ENCODE measurements at regions of chr3 and their contacts with region 1.

Region 1: DNA sequence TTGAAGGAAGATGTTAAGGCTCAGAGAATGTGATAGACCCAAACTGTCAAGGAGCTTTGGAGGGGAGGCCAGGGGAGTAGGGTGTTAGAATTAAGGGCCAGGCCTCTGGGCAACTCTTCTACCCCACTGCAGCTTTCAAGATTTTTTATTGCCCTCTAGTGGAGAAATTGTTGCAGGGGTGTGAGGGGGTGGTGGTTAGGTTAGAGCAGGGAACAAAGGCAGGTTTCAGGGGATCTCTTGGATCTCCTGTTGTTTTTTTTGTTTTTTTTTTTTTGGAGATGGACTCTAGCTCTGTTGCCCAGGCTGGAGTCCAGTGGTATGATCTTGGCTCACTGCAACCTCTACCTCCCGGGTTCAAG is 1.4 kb upstream of the SEC13 start:
- DNase-seq: peak in 3 of 9 donors; percentile 12 to 32 (median 17)
- ATAC-seq: no peak
- H3K4me3 ChIP-seq: no peak overlapping the region
- H3K4me3 Mint-ChIP-seq: peak overlapping the region in 5 of 10 donors; percentile 5 to 85 (median 32)
- H3K27ac ChIP-seq: no peak overlapping the region
- H3K27ac Mint-ChIP-seq: peak overlapping the region in 8 of 9 donors; percentile 0 to 97 (median 86)
- H3K4me1 ChIP-seq: peaks cover 12 to 22% of the 10 kb centered on the region in 2 donors
- H3K4me1 Mint-ChIP-seq: peaks cover 5 to 40% (median 30%) of the 10 kb centered on the region in 7 donors
- H3K27me3 ChIP-seq: no peaks in the 10 kb centered on the region
- H3K27me3 Mint-ChIP-seq: peaks cover 0 to 27% (median 9%) of the 10 kb centered on the region in 5 donors

Region 2: GRCh38 chr3:9503283-9503682 is 819.0 kb before region 1 on chr3:
- CTCF ChIA-PET with region 1: no interaction called
- POLR2A ChIA-PET with region 1: no interaction called
- intact Hi-C with region 1: loop called in 1 of 2 experiments (anchors 5 kb)
- DNase-seq: peak; percentile 38 to 71 (median 60)
- ATAC-seq: peak; percentile 71
- H3K4me3 ChIP-seq: no peak overlapping the region
- H3K4me3 Mint-ChIP-seq: no peak overlapping the region
- H3K27ac ChIP-seq: no peak overlapping the region
- H3K27ac Mint-ChIP-seq: no peak overlapping the region
- H3K4me1 ChIP-seq: peaks cover 7 to 11% of the 10 kb centered on the region in 2 donors
- H3K4me1 Mint-ChIP-seq: peaks cover 0 to 9% (median 5%) of the 10 kb centered on the region in 7 donors
- H3K27me3 ChIP-seq: peaks cover 5 to 15% of the 10 kb centered on the region in 2 donors
- H3K27me3 Mint-ChIP-seq: peaks cover 28 to 44% (median 34%) of the 10 kb centered on the region in 5 donors

Region 3: DNA sequence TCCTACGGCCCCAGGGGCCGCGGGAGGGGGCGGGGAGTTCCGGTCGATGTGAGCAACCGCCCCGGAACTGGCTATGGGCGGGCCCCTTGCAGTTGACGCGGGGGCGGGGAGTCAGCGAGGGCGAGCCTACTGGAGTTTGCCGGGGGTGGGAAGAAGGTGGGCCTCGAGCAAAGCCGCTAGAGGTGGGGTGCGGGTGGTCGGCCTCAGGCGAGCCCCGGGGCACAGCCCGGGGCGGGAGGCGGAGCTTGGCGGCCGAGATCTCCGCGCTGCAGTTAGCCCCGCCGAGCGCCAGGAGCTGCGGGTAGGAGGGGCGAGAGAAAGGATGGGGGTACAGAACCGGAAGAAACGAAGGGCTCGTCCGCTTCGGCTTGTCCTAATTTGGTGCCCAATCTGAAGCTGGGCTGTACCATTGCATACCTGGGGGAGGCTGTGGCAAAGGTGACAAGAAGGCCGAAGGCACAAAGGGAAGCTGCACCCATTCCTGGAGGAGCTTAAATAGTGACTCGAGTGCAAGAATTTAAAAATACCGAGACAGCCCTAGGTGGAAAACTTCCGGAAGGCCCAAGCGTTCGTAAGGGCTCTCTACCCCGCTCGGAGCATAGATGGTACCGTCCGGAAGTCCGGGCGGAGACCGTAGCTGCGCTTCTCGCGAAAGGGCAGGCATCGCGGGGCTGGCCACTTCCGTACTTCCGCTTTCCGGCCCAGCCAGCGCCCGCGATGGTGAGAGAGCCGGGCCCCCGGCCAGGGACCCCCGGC is 529.7 kb before region 1 on chr3 and contains the starts of genes ARPC4 and TADA3:
- CTCF ChIA-PET with region 1: no interaction called
- POLR2A ChIA-PET with region 1: no interaction called
- intact Hi-C with region 1: loop called (anchors 1 kb)
- DNase-seq: peak; percentile 83 to 96 (median 93)
- ATAC-seq: peak; percentile 92
- H3K4me3 ChIP-seq: peak within 1 kb of the TSS; percentile 81
- H3K4me3 Mint-ChIP-seq: peak within 1 kb of the TSS; percentile 90 to 100 (median 98)
- H3K27ac ChIP-seq: peak within 1 kb of the TSS; percentile 98
- H3K27ac Mint-ChIP-seq: peak within 1 kb of the TSS; percentile 97 to 100 (median 99)
- H3K4me1 ChIP-seq: peaks cover 47% of the 10 kb centered on the region in 2 donors
- H3K4me1 Mint-ChIP-seq: peaks cover 45 to 75% (median 63%) of the 10 kb centered on the region in 7 donors
- H3K27me3 ChIP-seq: no peaks in the 10 kb centered on the region
- H3K27me3 Mint-ChIP-seq: no peaks in the 10 kb centered on the region
- total RNA-seq, gene ARPC4: 128 to 273 (median 129) TPM
- total RNA-seq, gene TADA3: 31.6 to 67.4 (median 36.8) TPM

Region 4: DNA sequence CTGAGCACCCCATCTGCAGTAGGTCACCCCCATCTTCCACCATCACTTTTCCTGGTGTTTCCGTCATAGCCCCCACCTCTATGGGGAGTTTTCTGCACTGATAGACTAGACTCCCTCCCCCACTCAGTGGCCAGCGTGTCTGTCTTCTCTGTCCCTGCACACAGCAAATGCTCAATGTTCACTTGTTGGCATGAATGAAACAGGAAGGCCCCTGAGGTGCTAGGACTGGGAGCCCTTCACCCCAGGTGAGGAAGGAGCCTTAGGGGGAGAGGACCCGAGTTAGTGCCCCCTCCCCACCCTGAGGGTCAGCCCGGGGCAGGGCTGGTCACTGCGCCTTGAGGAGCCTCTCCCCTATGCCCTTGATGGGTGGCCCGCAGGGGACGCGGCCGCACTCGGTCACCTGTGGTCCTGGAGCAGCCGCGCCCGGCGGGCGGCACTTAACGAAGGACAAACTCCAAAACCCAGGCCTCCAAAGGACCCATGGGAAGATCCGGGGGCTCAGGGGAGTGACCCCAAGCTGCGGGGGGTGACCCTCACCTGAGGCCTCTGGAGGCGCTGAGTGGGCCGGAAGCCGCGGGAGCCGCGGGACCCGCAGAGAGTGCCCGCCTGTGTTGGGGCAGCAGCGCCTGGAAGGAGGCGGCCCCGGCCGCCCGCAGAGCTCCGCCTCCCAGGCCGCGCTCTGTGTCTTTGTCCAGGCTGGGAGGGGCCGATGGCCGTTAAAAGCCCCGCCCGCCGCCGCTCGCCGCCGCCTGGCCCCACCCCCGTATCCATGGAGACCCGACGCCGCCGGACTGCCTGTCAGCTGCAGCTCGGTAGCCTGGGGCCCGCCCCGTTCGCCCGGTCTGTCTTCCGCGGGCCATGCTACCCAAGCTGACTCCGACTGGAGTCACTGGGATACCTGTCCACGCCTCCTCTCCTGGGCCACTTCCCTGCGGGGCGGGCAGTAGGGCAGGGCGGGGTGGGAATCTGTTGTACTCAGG is 311.6 kb before region 1 on chr3:
- CTCF ChIA-PET with region 1: no interaction called
- POLR2A ChIA-PET with region 1: no interaction called
- intact Hi-C with region 1: loop called in 1 of 2 experiments (anchors 1 kb)
- DNase-seq: peak; percentile 25 to 91 (median 46)
- ATAC-seq: peak; percentile 90
- H3K4me3 ChIP-seq: peak overlapping the region; percentile 44
- H3K4me3 Mint-ChIP-seq: peak overlapping the region; percentile 24 to 81 (median 70)
- H3K27ac ChIP-seq: peak overlapping the region; percentile 9
- H3K27ac Mint-ChIP-seq: peak overlapping the region in 2 of 9 donors; percentile 28 to 57
- H3K4me1 ChIP-seq: peaks cover 0 to 14% of the 10 kb centered on the region in 2 donors
- H3K4me1 Mint-ChIP-seq: peaks cover 15 to 28% (median 19%) of the 10 kb centered on the region in 7 donors
- H3K27me3 ChIP-seq: no peaks in the 10 kb centered on the region
- H3K27me3 Mint-ChIP-seq: peaks cover 0 to 19% (median 14%) of the 10 kb centered on the region in 5 donors

Region 5: DNA sequence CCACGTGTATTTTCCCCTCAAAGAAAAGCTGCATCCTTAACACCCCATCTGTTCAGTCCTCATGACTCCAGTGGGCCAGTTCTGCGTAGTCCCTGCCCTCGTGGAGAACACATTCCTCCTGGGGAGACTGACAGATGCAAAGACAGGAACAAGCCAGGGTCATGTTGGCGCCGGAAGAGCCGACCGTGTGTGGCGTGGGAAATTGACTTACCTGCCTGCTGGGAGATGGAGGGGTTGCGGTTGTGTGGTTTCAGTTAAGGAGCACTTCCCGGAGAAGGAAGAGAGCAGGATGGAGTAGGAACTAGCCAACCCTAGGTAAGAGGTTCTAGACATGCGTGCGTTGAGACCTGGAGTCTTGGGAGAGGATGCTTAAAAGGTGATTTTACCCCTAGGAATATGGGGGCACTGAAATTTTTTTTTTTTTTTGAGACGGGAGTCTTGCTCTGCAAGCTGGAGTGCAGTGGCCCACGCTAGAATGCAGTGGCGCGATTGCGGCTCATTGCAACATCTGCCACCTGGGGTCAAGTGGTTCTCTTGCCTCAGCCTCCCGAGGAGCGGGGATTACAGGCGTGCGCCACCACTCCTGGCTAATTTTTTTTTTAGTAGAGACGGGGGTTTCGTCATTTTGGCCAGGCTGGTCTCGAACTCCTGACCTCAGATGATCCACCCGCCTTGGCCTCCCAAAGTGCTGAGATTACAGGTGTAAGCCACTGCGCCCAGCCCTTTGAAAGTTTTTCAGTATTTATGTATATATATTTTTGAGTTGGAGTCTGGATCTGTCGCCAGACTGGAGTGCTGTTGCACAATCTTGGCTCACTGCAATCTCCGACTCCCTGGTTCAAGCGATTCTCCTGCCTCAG is 179.4 kb before region 1 on chr3:
- CTCF ChIA-PET with region 1: no interaction called
- POLR2A ChIA-PET with region 1: interaction called, 6 read pairs
- intact Hi-C with region 1: loop called in 1 of 2 experiments (anchors 1 kb)
- DNase-seq: peak in 2 of 9 donors; percentile 11 to 12
- ATAC-seq: no peak
- H3K4me3 ChIP-seq: peak overlapping the region; percentile 87
- H3K4me3 Mint-ChIP-seq: peak overlapping the region; percentile 85 to 98 (median 96)
- H3K27ac ChIP-seq: peak overlapping the region; percentile 95
- H3K27ac Mint-ChIP-seq: peak overlapping the region; percentile 38 to 98 (median 94)
- H3K4me1 ChIP-seq: peaks cover 10 to 12% of the 10 kb centered on the region in 2 donors
- H3K4me1 Mint-ChIP-seq: peaks cover 14 to 48% (median 37%) of the 10 kb centered on the region in 7 donors
- H3K27me3 ChIP-seq: no peaks in the 10 kb centered on the region
- H3K27me3 Mint-ChIP-seq: no peaks in the 10 kb centered on the region

Measured in naive thymus-derived CD4-positive, alpha-beta T cell (primary cell).